Panc1 (cell line): ENCODE measurements at regions of chrX and their contacts with region 1.

Region 1: GRCh38 chrX:69387567-69388487 is 116.3 kb upstream of the NALF2 start:
- DNase-seq: no peak
- ATAC-seq: peak; percentile 89
- H3K4me3 ChIP-seq: no peak overlapping the region
- H3K27ac ChIP-seq: no peak overlapping the region
- H3K4me1 ChIP-seq: no peaks in the 10 kb centered on the region; the same call in 1 of the 2 replicates
- H3K27me3 ChIP-seq: peaks cover 3% of the 10 kb centered on the region; the same call in 1 of the 2 replicates
- CTCF ChIP-seq: peak; percentile 86

Region 2: DNA sequence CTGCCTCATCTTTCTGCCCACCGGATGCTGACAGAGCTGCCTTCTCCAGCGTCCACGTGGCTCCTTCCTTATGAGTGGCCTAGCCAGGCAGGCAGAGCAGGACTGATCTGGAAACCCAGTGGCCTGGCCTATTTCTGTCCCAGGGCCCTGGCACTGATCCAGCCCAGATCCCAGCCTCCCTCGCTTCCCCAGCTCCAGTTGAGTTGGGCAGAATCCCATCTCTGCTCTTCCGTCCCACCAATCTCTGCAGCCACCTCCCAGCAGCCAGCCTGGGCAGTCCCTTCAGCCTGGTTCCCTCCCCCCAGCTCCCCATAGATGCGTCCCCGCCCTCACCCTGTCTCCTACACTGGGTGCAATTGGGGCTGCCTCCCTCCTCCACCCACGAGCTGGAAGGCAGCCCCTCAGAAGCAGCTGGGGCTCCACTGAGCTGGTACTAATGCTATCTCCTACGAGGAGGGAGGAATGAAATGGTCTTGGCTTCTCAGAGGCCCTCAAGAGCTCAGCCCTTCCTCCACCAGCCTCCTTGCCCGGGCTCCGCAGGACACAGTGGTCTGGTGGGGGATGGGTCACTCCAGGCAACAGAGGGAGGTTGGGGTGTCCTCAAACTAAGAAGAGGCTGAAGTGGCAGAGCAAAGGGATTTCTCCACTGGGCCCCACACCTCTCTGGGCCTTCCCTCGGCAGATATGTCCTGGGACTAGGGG is 316.7 kb before region 1 on chrX:
- CTCF ChIA-PET with region 1: no interaction called
- POLR2A ChIA-PET with region 1: no interaction called
- in situ Hi-C with region 1: no loop called
- intact Hi-C with region 1: no loop called
- DNase-seq: no peak
- ATAC-seq: no peak
- H3K4me3 ChIP-seq: no peak overlapping the region
- H3K27ac ChIP-seq: no peak overlapping the region
- H3K4me1 ChIP-seq: no peaks in the 10 kb centered on the region
- H3K27me3 ChIP-seq: no peaks in the 10 kb centered on the region
- CTCF ChIP-seq: no peak

Region 3: GRCh38 chrX:69291116-69291515 is 96.7 kb before region 1 on chrX:
- CTCF ChIA-PET with region 1: interaction called, 5 read pairs
- POLR2A ChIA-PET with region 1: no interaction called
- in situ Hi-C with region 1: no loop called
- intact Hi-C with region 1: loop called (anchors 5 kb)
- DNase-seq: no peak
- ATAC-seq: no peak
- H3K4me3 ChIP-seq: no peak overlapping the region
- H3K27ac ChIP-seq: no peak overlapping the region
- H3K4me1 ChIP-seq: no peaks in the 10 kb centered on the region; the same call in 1 of the 2 replicates
- H3K27me3 ChIP-seq: no peaks in the 10 kb centered on the region
- CTCF ChIP-seq: no peak

Region 4: DNA sequence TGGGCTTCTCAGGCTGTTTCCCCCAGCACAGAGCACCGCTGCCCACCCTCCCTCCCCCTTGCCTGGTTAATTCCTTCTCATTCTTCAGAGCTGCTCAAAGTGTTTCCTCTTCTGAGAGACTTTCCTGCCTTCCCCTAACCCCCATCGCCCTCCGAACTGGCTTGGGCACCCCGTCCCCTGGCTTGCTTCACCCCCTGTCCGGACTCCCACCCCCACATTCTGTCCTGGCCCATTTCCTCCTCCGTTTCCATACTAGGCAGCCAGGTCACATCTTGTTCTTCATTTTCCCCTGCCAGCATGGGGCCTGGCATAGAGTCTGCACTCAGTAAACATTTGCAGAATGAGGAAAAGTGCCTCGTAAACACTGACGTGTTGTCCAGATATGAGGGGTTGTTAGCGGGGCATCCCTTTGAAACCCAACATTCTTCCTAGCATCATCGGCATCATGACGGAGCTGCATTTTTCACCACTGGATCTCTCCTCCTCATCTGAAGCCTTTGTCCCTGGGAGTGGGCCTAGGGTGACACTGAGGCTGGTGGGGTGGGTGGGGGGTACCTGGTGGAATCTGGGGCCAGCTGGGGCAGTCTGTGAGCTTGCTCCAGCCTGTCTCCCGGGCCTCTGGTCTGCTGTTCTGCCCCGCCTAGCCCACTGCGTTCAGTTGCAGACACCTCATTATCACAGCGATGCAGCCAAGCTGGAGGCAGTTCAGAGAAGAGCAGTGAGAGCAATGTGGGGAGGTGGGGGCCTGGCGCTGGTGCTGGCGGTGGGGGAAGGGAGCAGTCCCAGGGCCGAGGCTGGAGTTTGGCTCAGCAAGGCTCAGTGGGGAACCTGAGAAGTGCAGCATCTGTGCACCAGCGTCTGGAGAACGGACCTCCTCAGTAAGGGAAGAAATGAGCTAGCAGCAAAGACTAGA is 73.1 kb before region 1 on chrX:
- CTCF ChIA-PET with region 1: no interaction called
- POLR2A ChIA-PET with region 1: no interaction called
- in situ Hi-C with region 1: no loop called
- intact Hi-C with region 1: no loop called
- DNase-seq: no peak
- ATAC-seq: no peak
- H3K4me3 ChIP-seq: no peak overlapping the region
- H3K27ac ChIP-seq: no peak overlapping the region
- H3K4me1 ChIP-seq: no peaks in the 10 kb centered on the region
- H3K27me3 ChIP-seq: no peaks in the 10 kb centered on the region
- CTCF ChIP-seq: no peak

Region 5: GRCh38 chrX:69398881-69399280 is 11.1 kb after region 1 on chrX:
- CTCF ChIA-PET with region 1: no interaction called
- POLR2A ChIA-PET with region 1: no interaction called
- in situ Hi-C with region 1: no loop called
- intact Hi-C with region 1: no loop called
- DNase-seq: no peak
- ATAC-seq: no peak
- H3K4me3 ChIP-seq: no peak overlapping the region
- H3K27ac ChIP-seq: no peak overlapping the region
- H3K4me1 ChIP-seq: no peaks in the 10 kb centered on the region
- H3K27me3 ChIP-seq: no peaks in the 10 kb centered on the region
- CTCF ChIP-seq: no peak